ENCODE measurements at regions of chr7 and their contacts with region 1.

Region 1: DNA sequence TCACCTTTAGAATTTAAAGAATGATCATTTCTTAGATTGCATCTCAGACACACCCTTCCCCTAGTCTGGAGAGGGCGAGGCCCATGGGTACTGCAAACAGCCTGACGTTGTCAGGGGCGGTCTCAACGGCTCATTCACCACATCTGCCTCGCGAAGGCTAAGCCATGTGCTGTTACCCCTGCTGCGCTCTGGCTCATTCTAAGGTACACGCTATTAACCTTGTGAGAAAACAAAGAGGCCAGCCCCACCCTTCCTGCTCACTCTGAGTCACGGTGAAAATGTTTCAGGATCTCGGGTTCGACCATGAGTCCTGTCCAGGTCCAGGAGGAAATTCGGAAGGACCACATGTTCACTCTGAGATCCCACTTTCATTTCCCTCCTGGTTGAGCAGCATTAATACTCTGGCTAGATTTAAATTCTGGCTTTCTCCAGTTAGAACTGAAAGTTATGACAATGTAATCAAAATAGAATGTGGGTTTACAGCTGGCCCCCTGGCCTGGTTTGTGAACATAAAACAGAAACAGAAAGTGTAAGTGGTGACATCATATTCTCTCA is 55.2 kb downstream of the EGFR start:
- DNase-seq: no peak
- ATAC-seq: peak; percentile 50

Region 2: GRCh38 chr7:55100544-55101301 is 26.7 kb after region 1 on chr7:
- intact Hi-C with region 1: loop called (anchors 1 kb)
- DNase-seq: peak; percentile 93
- ATAC-seq: peak; percentile 79

Measured in Right ventricle myocardium inferior (tissue), 1 donor.